Activated CD8-positive, alpha-beta memory T cell treated with anti-CD3 and anti-CD28 coated beads, Interleukin-2, amount 10 ng/mL, durations not matched to agents 7 days and 5 days (primary cell): ENCODE measurements at regions of chr19 and their contacts with region 1.

Region 1: GRCh38 chr19:55484593-55485438 is at the start of gene NAT14:
- DNase-seq: peak; percentile 72
- ATAC-seq: peak; percentile 74
- H3K4me3 Mint-ChIP-seq: peak within 1 kb of the TSS; percentile 73
- H3K27ac Mint-ChIP-seq: peak within 1 kb of the TSS; percentile 70
- H3K4me1 Mint-ChIP-seq: peaks cover 8% of the 10 kb centered on the region
- H3K27me3 Mint-ChIP-seq: no peaks in the 10 kb centered on the region
- total RNA-seq, gene NAT14: 14.6 to 23.2 TPM

Region 2: DNA sequence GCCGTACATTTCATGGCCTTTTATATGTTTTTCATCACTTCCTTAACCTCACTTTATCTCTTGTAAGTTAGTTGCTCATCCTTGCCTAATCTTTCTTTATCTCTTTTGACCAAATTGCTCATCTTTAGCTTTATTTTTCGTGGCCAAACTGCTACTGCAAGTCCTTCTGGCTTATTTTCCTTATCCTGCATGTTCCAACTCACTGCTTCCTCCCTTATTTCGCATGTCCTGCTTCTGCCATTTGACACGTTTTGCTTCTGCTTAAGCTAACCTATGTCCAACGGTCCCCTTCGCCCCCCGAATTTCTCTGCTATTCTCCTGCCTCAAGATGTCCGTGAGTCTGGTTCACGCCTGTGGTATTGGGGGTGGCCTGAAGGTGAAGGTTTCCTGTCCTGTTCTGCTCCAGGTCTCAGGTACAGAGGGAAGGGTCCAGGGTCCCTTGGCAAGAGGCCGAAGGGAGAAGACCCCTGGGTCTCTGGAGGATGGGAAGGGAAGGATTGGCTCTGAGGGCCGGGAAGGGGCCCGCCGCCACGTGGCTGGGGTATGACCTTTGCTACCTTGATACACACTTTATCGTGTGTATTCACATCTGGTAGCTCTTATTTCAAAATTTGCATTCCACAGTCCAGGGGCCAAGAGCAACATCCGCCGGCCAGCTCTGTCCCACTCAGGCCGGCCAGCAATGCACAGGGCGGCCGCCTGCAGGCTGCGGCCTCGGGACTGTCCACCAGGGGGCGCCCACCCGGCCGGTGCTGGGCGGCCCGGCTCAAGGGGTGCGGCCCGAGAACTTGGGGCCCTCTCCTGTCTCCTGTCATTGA is 17.4 kb before region 1 on chr19:
- CTCF ChIA-PET with region 1: interaction called, 27 read pairs
- DNase-seq: peak; percentile 74
- ATAC-seq: peak; percentile 96
- H3K4me3 Mint-ChIP-seq: no peak overlapping the region
- H3K27ac Mint-ChIP-seq: no peak overlapping the region
- H3K4me1 Mint-ChIP-seq: peaks cover 3% of the 10 kb centered on the region
- H3K27me3 Mint-ChIP-seq: peaks cover 2% of the 10 kb centered on the region